ENCODE measurements at regions of chr15 and their contacts with region 1.

Region 1: DNA sequence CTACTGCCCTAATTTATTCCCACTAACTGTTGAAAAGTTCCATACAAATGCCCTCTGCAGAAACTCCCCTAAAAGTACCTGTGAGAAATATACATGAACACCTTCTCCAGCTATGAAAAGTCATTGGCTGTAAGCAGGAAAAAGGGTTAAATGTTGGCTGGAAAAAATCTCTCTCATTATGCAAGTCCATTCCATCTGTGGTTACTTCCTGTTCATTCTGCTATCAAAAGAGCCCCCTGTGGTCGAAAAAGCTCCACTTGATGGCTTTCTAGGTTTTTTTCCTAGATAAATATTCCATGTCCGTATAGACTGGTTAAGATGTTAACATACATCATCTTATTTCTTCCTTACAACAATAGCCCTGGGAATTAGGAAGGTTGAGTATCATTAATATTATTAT is 56.2 kb upstream of the AKAP13 start:
- DNase-seq: no peak
- CTCF ChIP-seq: no peak

Region 2: GRCh38 chr15:85312486-85312885 is 11.7 kb before region 1 on chr15:
- CTCF ChIA-PET with region 1: interaction called, 54 read pairs
- POLR2A ChIA-PET with region 1: interaction called, 6 read pairs
- DNase-seq: peak; percentile 82
- CTCF ChIP-seq: no peak

Measured in GM10248 (cell line).